ENCODE measurements at regions of chr11 and their contacts with region 1.

Region 1: GRCh38 chr11:74702383-74703007 is 28.7 kb downstream of the CHRDL2 start:
- DNase-seq: peak; percentile 86
- H3K4me3 ChIP-seq: no peak overlapping the region
- H3K27ac ChIP-seq: peak overlapping the region in 3 of 4 donors; percentile 47 to 91 (median 86)
- H3K4me1 ChIP-seq: peaks cover 0 to 12% (median 4%) of the 10 kb centered on the region in 4 donors
- H3K27me3 ChIP-seq: no peaks in the 10 kb centered on the region
- CTCF ChIP-seq: peak; percentile 81 to 92 (median 89)
- EP300 ChIP-seq: no peak
- POLR2A ChIP-seq: no peak

Region 2: GRCh38 chr11:74543991-74544390 is 158.5 kb before region 1 on chr11:
- intact Hi-C with region 1: no loop called
- DNase-seq: no peak
- H3K4me3 ChIP-seq: no peak overlapping the region
- H3K27ac ChIP-seq: no peak overlapping the region
- H3K4me1 ChIP-seq: no peaks in the 10 kb centered on the region
- H3K27me3 ChIP-seq: no peaks in the 10 kb centered on the region
- CTCF ChIP-seq: no peak
- EP300 ChIP-seq: no peak
- POLR2A ChIP-seq: no peak

Region 3: DNA sequence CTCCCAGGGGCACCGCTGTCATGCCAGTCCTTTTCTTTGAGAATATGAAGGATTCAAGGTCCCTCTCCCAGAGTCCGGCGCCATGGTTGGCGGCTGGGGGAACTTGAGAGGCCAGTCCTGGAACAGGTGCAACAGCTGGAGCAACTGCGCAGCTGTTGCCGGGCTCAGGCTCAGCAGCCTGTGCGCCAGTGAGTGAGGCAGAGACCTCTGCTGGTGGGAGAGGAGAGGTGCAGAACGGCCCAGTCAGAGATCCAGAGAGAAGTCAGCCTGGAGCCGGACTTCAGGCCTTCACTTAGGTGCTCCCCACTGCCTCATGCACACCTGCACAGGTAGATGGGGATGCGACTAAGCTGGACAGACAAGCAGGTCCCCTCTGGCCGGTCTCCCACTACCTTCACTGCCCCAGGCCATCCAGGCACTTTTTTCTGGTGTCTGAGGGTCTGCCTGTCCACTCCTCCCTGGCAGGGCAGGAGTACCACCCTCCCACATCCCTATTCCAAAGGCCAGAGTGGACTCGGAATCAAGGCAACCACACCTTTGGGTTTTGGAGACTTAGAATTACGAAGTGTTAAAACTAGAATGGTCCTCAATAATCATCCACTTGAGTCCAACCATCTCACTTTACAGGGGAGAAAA is 24.2 kb after region 1 on chr11:
- intact Hi-C with region 1: loop called (anchors 1 kb)
- DNase-seq: peak; percentile 93
- H3K4me3 ChIP-seq: no peak overlapping the region
- H3K27ac ChIP-seq: peak overlapping the region; percentile 37 to 93 (median 81)
- H3K4me1 ChIP-seq: peaks cover 0 to 75% (median 47%) of the 10 kb centered on the region in 4 donors
- H3K27me3 ChIP-seq: peaks cover 0 to 10% (median 0%) of the 10 kb centered on the region in 3 donors
- CTCF ChIP-seq: peak; percentile 93 to 98 (median 96)
- EP300 ChIP-seq: no peak
- POLR2A ChIP-seq: no peak

Measured in sigmoid colon (tissue), 7 donors.